ENCODE measurements at regions of chr1 and their contacts with region 1.

Region 1: DNA sequence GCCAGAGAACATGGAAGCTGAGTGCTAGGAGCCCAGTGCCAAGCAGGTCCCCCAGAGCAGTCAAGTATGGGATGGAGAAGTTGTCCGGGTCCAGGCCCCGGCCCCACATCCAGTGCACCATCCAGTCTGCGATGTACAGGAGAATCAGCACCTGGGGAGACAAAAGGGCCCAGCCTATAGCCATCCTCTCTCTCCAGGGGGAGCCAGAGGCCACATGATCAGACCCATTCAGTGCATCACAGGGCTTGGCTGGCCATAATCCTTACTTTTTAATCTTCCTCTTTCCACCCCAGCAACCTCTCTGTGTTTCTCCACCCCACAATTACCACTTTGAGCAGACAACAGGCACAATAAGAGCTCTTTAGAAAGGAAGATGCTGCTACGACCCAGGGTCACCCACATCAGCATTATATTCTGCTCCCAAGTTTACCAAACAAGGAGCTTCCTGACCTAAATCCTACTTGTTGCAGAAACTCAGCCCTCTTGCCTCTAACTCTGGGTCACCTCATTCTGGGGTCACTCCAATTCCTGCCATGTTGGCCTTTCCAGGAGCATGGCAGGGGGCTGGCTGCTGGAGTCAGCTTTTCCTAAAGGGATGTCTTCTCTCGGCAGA is 16.4 kb upstream of the RAB29 start:
- DNase-seq: no peak

Region 2: GRCh38 chr1:205919026-205919746 is 127.5 kb after region 1 on chr1:
- intact Hi-C with region 1: loop called (anchors 2 kb)
- DNase-seq: peak; percentile 92

Region 3: DNA sequence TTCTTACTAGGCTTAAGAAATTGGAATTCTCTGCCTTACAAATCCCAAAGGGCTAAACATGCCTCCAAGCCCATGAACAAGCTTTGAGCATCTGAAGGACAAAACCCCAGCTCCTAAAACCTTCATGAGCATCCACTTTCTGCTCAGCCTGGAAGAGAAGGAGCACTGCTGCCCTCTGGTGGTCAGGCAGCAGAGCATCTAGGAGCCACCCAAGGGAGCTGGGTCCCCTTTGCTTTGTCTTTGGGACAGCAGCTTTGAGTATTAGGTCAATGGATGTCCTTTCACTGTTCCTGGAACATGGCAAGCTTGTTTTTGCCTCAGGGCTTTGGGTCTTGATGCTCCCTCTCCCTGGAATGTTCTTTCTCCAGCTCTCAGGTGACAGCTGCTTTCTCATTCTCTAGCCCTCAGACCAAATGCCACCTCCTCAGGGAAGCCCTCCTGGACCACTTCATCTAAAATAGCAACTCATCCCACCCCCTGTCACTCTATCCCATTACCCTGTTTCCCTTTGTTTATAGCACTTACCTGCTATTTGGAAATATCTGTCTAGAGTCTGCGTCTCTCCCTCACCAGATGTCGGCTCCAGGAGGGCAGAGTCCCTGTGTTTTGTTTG is 185.8 kb after region 1 on chr1:
- intact Hi-C with region 1: loop called (anchors 2 kb)
- DNase-seq: peak; percentile 89

Measured in cardiac septum (tissue), 1 donor.